ENCODE measurements at regions of chr12 and their contacts with region 1.

Region 1: GRCh38 chr12:49031553-49032162 is 13.1 kb upstream of the PRKAG1 start:
- DNase-seq: peak in 1 of 5 donors; percentile 46
- H3K4me3 ChIP-seq: no peak overlapping the region
- H3K4me3 Mint-ChIP-seq: no peak overlapping the region
- H3K27ac ChIP-seq: no peak overlapping the region
- H3K27ac Mint-ChIP-seq: peak overlapping the region in 1 of 8 donors; percentile 48
- H3K4me1 ChIP-seq: no peaks in the 10 kb centered on the region
- H3K4me1 Mint-ChIP-seq: peaks cover 0 to 4% (median under 1%) of the 10 kb centered on the region in 3 donors
- H3K27me3 ChIP-seq: no peaks in the 10 kb centered on the region
- H3K27me3 Mint-ChIP-seq: no peaks in the 10 kb centered on the region

Region 2: DNA sequence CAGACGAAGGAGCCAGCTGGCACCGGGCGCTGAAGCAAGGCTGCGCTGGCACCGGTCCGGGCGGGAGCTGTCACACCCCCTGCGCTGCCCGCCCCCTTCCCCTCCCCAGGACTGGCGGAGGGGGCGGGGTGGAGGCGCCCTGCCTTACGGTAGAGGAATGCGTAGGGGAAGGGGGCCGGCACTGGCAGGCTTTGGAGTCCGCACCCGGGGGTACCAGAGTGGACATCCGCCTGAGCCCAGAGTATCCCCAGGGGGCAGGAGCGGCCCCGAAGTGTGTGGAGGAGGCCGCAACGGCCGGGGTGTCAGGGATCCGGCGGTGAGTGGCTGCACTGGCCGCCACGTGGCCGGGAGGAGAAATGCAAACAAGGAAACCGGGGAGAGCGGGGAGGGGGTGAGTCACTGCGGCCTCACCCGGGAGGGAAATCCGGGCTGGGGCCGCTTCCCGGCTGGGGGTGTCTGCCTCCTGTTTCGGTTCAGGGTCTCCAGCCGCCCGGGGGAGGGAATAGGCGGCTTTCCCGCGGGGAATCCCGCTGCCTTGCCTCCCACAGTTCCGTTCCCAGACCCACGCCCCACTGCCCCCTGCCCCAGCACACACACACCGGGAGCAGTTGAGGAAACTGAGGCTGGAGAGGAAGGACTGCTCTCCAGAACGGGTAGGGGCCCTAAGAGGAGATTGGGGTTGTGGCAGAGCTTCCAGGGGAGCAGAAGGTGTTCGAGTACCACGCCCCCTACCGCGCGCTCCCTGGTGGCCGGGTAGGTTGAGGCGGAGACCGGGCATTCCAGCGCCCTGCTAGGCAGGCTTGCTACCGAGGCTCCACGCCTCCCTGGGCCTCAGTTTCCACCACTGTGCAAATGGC is 1272.6 kb before region 1 on chr12 and contains the start of gene RAPGEF3:
- CTCF ChIA-PET with region 1: no interaction called
- POLR2A ChIA-PET with region 1: no interaction called
- DNase-seq: peak; percentile 51 to 80 (median 60)
- H3K4me3 ChIP-seq: peak within 1 kb of the TSS; percentile 66
- H3K4me3 Mint-ChIP-seq: peak within 1 kb of the TSS; percentile 68 to 90 (median 75)
- H3K27ac ChIP-seq: peak within 1 kb of the TSS; percentile 31
- H3K27ac Mint-ChIP-seq: peak within 1 kb of the TSS in 3 of 8 donors; percentile 23 to 56 (median 50)
- H3K4me1 ChIP-seq: peaks cover 11% of the 10 kb centered on the region
- H3K4me1 Mint-ChIP-seq: peaks cover 11 to 31% (median 15%) of the 10 kb centered on the region in 3 donors
- H3K27me3 ChIP-seq: no peaks in the 10 kb centered on the region
- H3K27me3 Mint-ChIP-seq: no peaks in the 10 kb centered on the region
- total RNA-seq, gene RAPGEF3: 0.95 to 1.1 TPM

Region 3: GRCh38 chr12:48980953-48981756 is 50.5 kb before region 1 on chr12:
- CTCF ChIA-PET with region 1: no interaction called
- POLR2A ChIA-PET with region 1: no interaction called
- DNase-seq: peak; percentile 44 to 78 (median 61)
- H3K4me3 ChIP-seq: peak overlapping the region; percentile 89
- H3K4me3 Mint-ChIP-seq: peak overlapping the region; percentile 86 to 97 (median 90)
- H3K27ac ChIP-seq: peak overlapping the region; percentile 67
- H3K27ac Mint-ChIP-seq: peak overlapping the region; percentile 75 to 99 (median 94)
- H3K4me1 ChIP-seq: peaks cover 48% of the 10 kb centered on the region
- H3K4me1 Mint-ChIP-seq: peaks cover 43 to 56% (median 52%) of the 10 kb centered on the region in 3 donors
- H3K27me3 ChIP-seq: peaks cover 6% of the 10 kb centered on the region
- H3K27me3 Mint-ChIP-seq: peaks cover 4 to 11% of the 10 kb centered on the region in 2 donors

Region 4: GRCh38 chr12:49043856-49044258 is 12.2 kb after region 1 on chr12:
- CTCF ChIA-PET with region 1: interaction called, 18 read pairs
- POLR2A ChIA-PET with region 1: interaction called, 3 read pairs
- DNase-seq: peak; percentile 73 to 91 (median 78)
- H3K4me3 ChIP-seq: no peak overlapping the region
- H3K4me3 Mint-ChIP-seq: peak overlapping the region in 2 of 7 donors; percentile 18 to 57
- H3K27ac ChIP-seq: peak overlapping the region; percentile 18
- H3K27ac Mint-ChIP-seq: peak overlapping the region; percentile 62 to 97 (median 94)
- H3K4me1 ChIP-seq: no peaks in the 10 kb centered on the region
- H3K4me1 Mint-ChIP-seq: peaks cover 8 to 16% (median 12%) of the 10 kb centered on the region in 3 donors
- H3K27me3 ChIP-seq: no peaks in the 10 kb centered on the region
- H3K27me3 Mint-ChIP-seq: no peaks in the 10 kb centered on the region

Region 5: DNA sequence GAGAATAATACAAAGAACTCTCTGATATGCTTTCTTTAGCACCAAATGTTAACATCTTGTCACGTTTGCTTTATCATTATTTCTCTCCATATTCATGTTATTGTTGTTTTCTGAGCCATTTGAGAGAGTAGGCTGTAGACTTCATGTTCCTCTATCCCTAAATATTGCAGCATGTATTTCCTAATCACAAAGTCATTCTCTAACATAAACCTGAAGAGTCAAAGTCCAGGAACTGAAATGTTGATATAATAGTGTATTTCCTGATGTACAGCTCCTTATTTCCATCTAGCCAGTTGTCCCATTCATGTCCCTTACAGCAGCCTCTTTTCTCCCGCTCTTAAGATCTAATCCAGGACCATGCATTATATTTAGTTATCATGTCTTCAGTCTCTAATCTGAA is 408.4 kb after region 1 on chr12:
- CTCF ChIA-PET with region 1: no interaction called
- POLR2A ChIA-PET with region 1: no interaction called
- DNase-seq: no peak
- H3K4me3 ChIP-seq: no peak overlapping the region
- H3K4me3 Mint-ChIP-seq: no peak overlapping the region
- H3K27ac ChIP-seq: no peak overlapping the region
- H3K27ac Mint-ChIP-seq: peak overlapping the region in 1 of 8 donors; percentile 31
- H3K4me1 ChIP-seq: no peaks in the 10 kb centered on the region
- H3K4me1 Mint-ChIP-seq: peaks cover 0 to 6% (median 2%) of the 10 kb centered on the region in 3 donors
- H3K27me3 ChIP-seq: no peaks in the 10 kb centered on the region
- H3K27me3 Mint-ChIP-seq: no peaks in the 10 kb centered on the region